ENCODE measurements at regions of chr12 and their contacts with region 1.

Region 1: DNA sequence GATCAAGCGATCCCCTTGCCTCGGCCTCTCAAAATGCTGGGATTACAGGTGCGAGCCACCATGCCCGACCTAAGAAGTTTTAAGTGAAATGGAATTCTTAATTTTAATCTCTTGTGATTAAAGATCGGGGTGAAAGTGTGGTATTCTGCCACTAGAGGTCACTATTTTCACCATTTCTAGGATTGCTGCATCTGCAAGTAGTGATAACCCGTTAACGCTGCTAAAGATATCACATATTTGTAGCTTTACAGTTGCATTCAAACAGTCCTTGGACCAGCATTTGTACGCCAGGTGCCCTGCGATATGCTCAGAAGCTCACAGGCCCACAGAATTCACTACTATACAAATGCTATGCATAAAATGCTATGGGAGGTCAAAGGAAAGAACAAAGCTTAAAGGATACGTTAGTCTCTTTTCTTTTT is 19.3 kb downstream of the CCDC62 start:
- DNase-seq: peak; percentile 52
- ATAC-seq: peak; percentile 89
- H3K4me3 ChIP-seq: no peak overlapping the region
- H3K27ac ChIP-seq: no peak overlapping the region
- H3K4me1 ChIP-seq: 0 out of 4 replicates have a peak, but pooled peaks cover 0 to under 1% of the 10 kb centered on the region in 2 experiments
- H3K27me3 ChIP-seq: no peaks in the 10 kb centered on the region
- CTCF ChIP-seq: peak; percentile 55 to 82 (median 58); a peak in 5 of 6 replicates
- POLR2A ChIP-seq: no peak
- RAD21 ChIP-seq: peak; percentile 87

Region 2: GRCh38 chr12:122834104-122834920 is 40.6 kb after region 1 on chr12:
- CTCF ChIA-PET with region 1: interaction called, 10 read pairs
- POLR2A ChIA-PET with region 1: interaction called, 3 read pairs
- RAD21 ChIA-PET with region 1: no interaction called
- intact Hi-C with region 1: no loop called
- DNase-seq: peak; percentile 35
- ATAC-seq: peak; percentile 59
- H3K4me3 ChIP-seq: peak overlapping the region; percentile 49 to 71
- H3K27ac ChIP-seq: peak overlapping the region; percentile 38
- H3K4me1 ChIP-seq: peaks cover 32 to 48% of the 10 kb centered on the region in 2 experiments
- H3K27me3 ChIP-seq: no peaks in the 10 kb centered on the region
- CTCF ChIP-seq: no peak
- POLR2A ChIP-seq: no peak
- RAD21 ChIP-seq: no peak

Region 3: GRCh38 chr12:122860346-122861090 is 66.8 kb after region 1 on chr12:
- CTCF ChIA-PET with region 1: interaction called, 3 read pairs
- POLR2A ChIA-PET with region 1: no interaction called
- RAD21 ChIA-PET with region 1: interaction called in 1 of 2 experiments, 3 read pairs
- intact Hi-C with region 1: loop called (anchors 5 kb)
- DNase-seq: peak; percentile 50
- ATAC-seq: peak; percentile 74
- H3K4me3 ChIP-seq: no peak overlapping the region
- H3K27ac ChIP-seq: no peak overlapping the region
- H3K4me1 ChIP-seq: no peaks in the 10 kb centered on the region
- H3K27me3 ChIP-seq: no peaks in the 10 kb centered on the region
- CTCF ChIP-seq: peak; percentile 87 to 94 (median 87)
- POLR2A ChIP-seq: no peak
- RAD21 ChIP-seq: peak; percentile 96

Region 4: GRCh38 chr12:123445388-123446351 is 652.0 kb after region 1 on chr12:
- CTCF ChIA-PET with region 1: no interaction called
- POLR2A ChIA-PET with region 1: no interaction called
- RAD21 ChIA-PET with region 1: no interaction called
- intact Hi-C with region 1: no loop called
- DNase-seq: no peak
- ATAC-seq: no peak
- H3K4me3 ChIP-seq: no peak overlapping the region
- H3K27ac ChIP-seq: no peak overlapping the region
- H3K4me1 ChIP-seq: peaks cover 0 to 4% of the 10 kb centered on the region in 2 experiments; a peak in 1 of 4 replicates
- H3K27me3 ChIP-seq: no peaks in the 10 kb centered on the region
- CTCF ChIP-seq: no peak
- POLR2A ChIP-seq: no peak
- RAD21 ChIP-seq: no peak